Panc1 (cell line): ENCODE measurements at regions of chr17 and their contacts with region 1.

Region 1: GRCh38 chr17:27760069-27760885 is 40.1 kb downstream of the NOS2 start:
- DNase-seq: no peak
- ATAC-seq: peak; percentile 79
- H3K4me3 ChIP-seq: no peak overlapping the region
- H3K27ac ChIP-seq: no peak overlapping the region
- H3K4me1 ChIP-seq: no peaks in the 10 kb centered on the region
- H3K27me3 ChIP-seq: no peaks in the 10 kb centered on the region
- CTCF ChIP-seq: peak; percentile 95

Region 2: DNA sequence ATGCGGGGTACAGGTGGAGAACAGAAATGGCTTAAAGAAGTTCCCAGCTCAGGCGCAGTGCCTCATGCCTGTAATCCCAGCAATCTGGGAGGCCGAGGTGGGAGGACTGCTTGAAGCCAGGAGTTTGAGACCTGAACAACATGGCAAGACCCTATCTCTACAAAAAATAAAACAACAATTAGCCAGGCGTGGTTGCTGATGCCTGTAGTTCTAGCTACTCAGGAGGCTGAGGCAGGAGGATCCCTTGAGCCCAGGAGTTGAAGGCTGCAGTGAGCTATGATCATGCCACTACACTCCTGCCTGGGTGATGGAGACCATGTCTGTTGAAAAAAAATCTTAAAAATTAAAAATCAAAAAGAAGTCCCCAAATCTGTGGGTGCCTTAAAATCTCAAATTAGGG is 694.7 kb before region 1 on chr17:
- CTCF ChIA-PET with region 1: no interaction called
- POLR2A ChIA-PET with region 1: no interaction called
- in situ Hi-C with region 1: no loop called
- intact Hi-C with region 1: no loop called
- DNase-seq: no peak
- ATAC-seq: no peak
- H3K4me3 ChIP-seq: no peak overlapping the region
- H3K27ac ChIP-seq: no peak overlapping the region
- H3K4me1 ChIP-seq: no peaks in the 10 kb centered on the region
- H3K27me3 ChIP-seq: 0 out of 2 replicates have a peak, but pooled peaks cover 5% of the 10 kb centered on the region
- CTCF ChIP-seq: no peak

Region 3: GRCh38 chr17:27609611-27610303 is 150.5 kb before region 1 on chr17:
- CTCF ChIA-PET with region 1: interaction called, 3 read pairs
- POLR2A ChIA-PET with region 1: no interaction called
- in situ Hi-C with region 1: no loop called
- intact Hi-C with region 1: loop called (anchors 5 kb)
- DNase-seq: no peak
- ATAC-seq: peak; percentile 81
- H3K4me3 ChIP-seq: no peak overlapping the region
- H3K27ac ChIP-seq: no peak overlapping the region
- H3K4me1 ChIP-seq: no peaks in the 10 kb centered on the region
- H3K27me3 ChIP-seq: no peaks in the 10 kb centered on the region
- CTCF ChIP-seq: peak; percentile 85

Region 4: DNA sequence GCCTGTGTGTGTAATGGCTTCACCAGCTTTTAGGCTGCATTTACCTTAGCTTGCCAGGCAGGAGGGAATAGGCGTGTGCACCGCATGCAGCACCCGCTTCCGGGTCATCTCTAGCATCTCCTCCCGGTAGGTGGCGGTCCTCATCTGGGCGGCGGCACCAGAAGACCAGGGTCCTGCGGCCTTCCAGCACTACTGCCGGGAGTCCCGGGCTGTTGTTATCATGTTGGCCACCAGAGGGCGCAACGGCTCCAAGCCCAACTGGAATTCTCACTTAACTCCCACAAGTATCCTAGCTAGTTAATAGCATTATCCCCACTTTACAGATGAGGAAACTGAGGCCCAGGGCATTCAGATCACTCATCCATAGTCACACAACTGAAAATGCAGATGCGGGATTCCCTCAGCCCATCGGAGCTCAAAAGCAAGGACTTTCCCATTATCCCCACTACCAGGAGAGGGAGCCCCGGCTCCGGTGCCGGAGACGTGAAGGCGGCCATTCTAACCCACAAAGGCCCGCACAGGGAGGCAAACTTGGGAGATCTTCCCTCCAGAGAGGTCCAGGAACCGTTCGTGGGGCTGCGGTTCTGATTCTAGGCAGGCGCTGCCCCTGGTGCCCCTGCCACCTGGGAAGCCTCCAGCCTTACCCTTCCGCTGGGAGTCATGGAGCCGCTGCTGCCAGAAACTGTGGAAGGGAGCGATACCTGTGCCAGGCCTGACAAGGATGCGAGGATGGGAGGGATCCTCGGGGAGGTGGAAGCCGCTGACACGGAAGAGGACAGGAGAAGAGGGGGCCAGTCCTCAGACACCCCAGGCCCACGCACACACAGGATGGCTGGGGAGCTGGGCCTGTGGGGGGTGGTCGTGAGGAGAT is 105.4 kb before region 1 on chr17:
- CTCF ChIA-PET with region 1: interaction called, 42 read pairs
- POLR2A ChIA-PET with region 1: no interaction called
- in situ Hi-C with region 1: no loop called
- intact Hi-C with region 1: loop called (anchors 1 kb)
- DNase-seq: peak; percentile 38
- ATAC-seq: peak; percentile 92
- H3K4me3 ChIP-seq: no peak overlapping the region
- H3K27ac ChIP-seq: no peak overlapping the region
- H3K4me1 ChIP-seq: no peaks in the 10 kb centered on the region
- H3K27me3 ChIP-seq: no peaks in the 10 kb centered on the region
- CTCF ChIP-seq: peak; percentile 98

Region 5: DNA sequence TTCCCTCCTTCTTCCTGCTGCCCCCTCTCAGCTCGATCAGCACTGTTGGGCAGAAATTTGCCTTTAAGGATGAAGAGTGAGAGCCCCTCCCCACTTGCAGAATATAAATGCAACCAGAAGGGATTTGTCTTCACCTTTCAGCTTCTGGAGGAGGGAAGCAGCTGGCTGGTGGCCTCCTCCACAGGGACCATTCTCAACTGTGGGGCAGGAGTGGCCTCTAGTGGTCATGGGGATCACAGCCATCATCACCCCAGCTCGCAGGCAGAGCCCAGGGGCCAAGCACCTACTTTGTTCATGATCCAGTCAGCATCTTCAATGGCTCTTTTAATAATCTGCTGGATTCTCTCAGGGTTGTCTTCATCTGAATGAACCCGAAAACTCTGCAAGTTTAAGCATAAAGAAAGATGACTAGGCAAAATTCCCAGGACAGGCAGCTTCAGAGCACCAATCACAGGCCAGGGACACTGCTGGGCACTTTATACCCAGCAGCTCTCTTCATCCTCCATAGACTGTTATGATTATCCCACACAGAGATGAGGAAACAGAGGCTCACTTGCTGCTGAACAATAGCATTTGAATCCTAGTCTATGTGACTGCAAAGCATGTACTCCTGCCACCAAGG is 119.8 kb after region 1 on chr17:
- CTCF ChIA-PET with region 1: interaction called, 54 read pairs
- POLR2A ChIA-PET with region 1: no interaction called
- in situ Hi-C with region 1: no loop called
- intact Hi-C with region 1: loop called (anchors 1 kb)
- DNase-seq: peak; percentile 38
- ATAC-seq: peak; percentile 98
- H3K4me3 ChIP-seq: no peak overlapping the region
- H3K27ac ChIP-seq: no peak overlapping the region
- H3K4me1 ChIP-seq: no peaks in the 10 kb centered on the region
- H3K27me3 ChIP-seq: no peaks in the 10 kb centered on the region
- CTCF ChIP-seq: peak; percentile 89